Posterior cingulate gyrus (tissue), 11 donors: ENCODE measurements at regions of chr10 and their contacts with region 1.

Region 1: GRCh38 chr10:55091691-55092328 is 290.8 kb upstream of the PCDH15 start:
- DNase-seq: no peak

Region 2: GRCh38 chr10:55212051-55212450 is 120.2 kb after region 1 on chr10:
- intact Hi-C with region 1: no loop called
- DNase-seq: no peak

Region 3: GRCh38 chr10:55410415-55410885 is 318.6 kb after region 1 on chr10:
- intact Hi-C with region 1: loop called (anchors 2 kb)
- DNase-seq: peak in 9 of 10 donors; percentile 24 to 92 (median 56)

Region 4: DNA sequence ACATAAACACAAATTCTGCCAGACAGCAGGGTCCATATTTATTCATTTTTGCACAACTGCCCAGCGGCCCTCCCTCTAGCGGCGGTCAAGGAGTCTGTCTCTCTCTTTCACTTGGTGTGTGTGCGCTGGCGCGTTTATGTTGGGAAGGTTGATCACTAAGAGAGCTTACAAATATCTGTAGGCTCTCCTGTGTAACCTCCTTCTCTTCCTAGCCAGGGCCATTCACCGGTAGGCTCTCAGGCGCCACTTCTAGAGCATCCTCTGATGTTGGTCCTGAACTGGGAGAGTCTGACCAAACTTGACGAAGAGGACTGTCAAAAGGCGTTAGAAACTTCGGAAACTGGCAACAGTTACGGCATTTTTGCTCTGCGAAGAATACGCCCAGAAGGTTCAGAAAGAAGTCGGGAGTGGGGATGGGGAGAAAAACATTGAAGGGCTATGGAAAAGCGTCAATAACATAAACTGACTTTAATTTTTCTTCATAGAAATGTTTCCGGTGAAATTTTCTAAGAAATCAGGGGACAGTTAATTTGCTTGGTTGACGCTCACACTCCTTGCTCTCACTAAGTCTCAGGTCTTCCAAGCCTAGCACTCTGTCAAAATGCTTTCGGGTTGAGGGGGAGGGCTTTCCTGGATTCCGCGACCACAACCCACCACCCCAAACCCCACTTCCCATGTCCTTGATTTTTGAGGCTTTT is 538.1 kb after region 1 on chr10:
- intact Hi-C with region 1: loop called (anchors 5 kb)
- DNase-seq: peak; percentile 12 to 89 (median 31)

Region 5: GRCh38 chr10:55747244-55747643 is 655.4 kb after region 1 on chr10:
- intact Hi-C with region 1: loop called (anchors 10 kb)
- DNase-seq: no peak